ENCODE measurements at regions of chr15 and their contacts with region 1.

Region 1: GRCh38 chr15:71011503-71012155 is 103.6 kb upstream of the THSD4 start:
- DNase-seq: peak; percentile 47 to 77
- H3K4me3 ChIP-seq: no peak overlapping the region
- H3K4me1 ChIP-seq: no peaks in the 10 kb centered on the region
- H3K27me3 ChIP-seq: no peaks in the 10 kb centered on the region

Region 2: DNA sequence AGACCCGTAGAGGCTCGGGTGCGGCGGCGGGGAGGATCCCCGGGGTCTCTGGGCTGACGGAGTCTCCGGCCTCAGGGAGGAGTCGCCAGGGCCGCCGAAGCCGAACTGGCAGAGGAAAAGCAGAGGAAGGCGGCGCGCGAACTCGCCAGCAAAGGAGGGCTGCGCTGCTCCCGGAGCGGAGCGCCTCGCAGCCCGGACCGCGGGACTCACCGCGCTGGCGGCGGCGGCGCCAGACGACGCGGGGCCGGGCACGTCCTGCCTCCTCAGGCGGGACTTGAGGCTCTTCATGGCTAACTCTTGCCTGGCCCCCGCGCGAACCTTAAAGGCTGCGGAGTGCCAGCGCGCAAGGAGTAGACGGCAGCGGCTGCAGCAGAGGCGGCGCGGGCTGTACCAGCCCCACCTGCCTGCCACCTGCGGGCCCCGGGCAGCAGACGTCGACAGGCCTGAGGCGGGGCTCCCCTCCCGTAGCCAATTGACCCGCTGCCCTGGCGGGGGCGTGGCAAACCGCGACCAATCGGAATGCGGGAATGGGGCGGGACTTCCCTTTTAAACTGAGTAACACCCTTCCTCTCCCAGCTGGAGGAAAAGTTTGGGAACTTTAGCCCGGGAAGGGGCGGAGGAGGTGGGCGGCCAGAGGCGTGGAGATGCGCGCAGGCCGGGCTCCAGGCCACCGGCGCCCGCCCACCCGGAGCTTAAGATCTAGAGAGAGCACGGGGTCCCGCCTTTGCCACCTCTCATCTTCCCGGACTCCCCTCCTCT is 248.3 kb before region 1 on chr15 and contains the start of gene UACA:
- in situ Hi-C with region 1: no loop called
- DNase-seq: peak; percentile 100
- H3K4me3 ChIP-seq: peak within 1 kb of the TSS; percentile 73
- H3K4me1 ChIP-seq: peaks cover 41% of the 10 kb centered on the region
- H3K27me3 ChIP-seq: no peaks in the 10 kb centered on the region

Region 3: DNA sequence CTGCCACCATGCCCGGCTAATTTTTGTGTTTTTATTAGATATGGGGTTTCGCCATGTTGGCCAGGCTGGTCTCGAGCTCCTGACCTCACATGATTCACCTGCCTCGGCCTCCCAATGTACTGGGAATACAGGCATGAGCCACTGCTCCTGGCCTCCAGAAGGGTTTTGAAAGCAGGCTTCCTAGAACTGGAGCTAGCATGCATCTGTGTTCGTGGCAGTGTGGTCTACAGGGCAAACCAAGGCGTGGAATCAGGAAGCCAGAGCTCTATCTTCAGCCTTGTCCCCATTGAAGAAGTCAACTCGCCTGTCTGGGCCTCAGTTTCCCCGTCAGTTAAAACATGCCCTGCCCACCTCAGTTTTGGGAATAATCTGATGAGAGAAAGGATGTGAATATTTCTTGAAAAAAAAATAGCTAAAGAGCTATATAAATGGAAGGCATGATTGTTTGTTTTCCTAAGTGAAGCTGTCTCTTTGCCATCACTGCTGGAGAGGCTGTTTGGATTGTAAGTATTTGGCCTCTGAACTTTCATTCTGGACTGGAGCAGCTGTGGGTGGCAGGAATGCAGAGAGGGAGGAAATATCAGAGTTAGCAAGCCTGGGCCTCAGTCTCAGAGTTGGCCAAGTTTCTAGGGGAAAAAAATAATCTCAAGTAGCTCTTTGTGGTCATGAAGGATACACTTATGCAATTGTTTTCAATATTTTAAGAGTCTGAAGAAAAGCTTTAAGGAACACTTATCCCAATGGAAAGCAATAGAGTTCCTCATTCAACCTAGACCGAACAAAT is 211.8 kb before region 1 on chr15:
- in situ Hi-C with region 1: no loop called
- DNase-seq: no peak
- H3K4me3 ChIP-seq: no peak overlapping the region
- H3K4me1 ChIP-seq: no peaks in the 10 kb centered on the region
- H3K27me3 ChIP-seq: no peaks in the 10 kb centered on the region

Region 4: DNA sequence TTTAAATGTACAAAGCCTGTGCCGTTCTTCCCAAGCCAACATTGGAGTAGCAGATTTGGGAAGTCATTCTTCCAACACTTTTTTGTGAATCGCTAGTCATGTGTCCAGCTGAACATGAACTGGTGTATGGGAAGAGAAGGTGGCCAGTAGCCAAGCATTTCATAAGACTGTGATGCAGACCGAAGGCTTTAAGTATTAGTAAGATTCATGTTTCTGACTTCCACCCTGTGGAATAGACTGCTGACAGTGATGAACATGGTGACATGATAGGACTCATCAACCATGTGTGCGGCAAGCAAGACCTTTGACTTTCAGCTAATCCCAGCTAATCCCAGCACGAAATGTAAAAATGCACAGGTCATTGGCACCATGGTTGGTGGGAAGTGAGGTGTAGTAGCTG is 55.4 kb after region 1 on chr15:
- in situ Hi-C with region 1: no loop called
- DNase-seq: no peak
- H3K4me3 ChIP-seq: no peak overlapping the region
- H3K4me1 ChIP-seq: no peaks in the 10 kb centered on the region
- H3K27me3 ChIP-seq: 0 out of 2 replicates have a peak, but pooled peaks cover 2% of the 10 kb centered on the region

Region 5: DNA sequence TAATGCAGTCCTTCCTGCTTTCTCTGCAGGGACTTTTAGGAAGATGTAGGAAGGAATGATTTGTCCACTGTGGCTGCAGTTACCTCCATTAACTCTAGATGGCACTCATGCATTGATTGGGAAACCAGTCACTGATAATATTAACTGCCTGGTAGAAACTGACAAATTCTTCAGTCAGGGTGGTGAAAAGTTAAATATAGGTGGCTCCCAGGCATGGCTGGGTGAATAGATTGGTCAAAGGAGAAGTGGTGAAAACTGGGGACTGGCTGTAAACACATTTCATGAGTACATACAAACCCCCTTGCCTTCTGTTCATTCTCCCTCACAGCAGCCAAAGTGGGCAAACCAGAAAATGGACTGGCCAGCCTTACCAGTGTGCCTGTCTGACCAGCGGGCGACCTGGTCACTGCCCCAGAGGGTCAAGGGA is 437.1 kb after region 1 on chr15:
- in situ Hi-C with region 1: loop called (anchors 10 kb)
- DNase-seq: peak; percentile 83 to 86
- H3K4me3 ChIP-seq: no peak overlapping the region
- H3K4me1 ChIP-seq: peaks cover 8% of the 10 kb centered on the region
- H3K27me3 ChIP-seq: no peaks in the 10 kb centered on the region

Measured in HAP-1 (cell line).